Naive thymus-derived CD4-positive, alpha-beta T cell (primary cell): ENCODE measurements at regions of chr14 and their contacts with region 1.

Region 1: GRCh38 chr14:73358187-73358586 is 100.2 kb downstream of the NUMB start:
- DNase-seq: no peak
- ATAC-seq: no peak
- H3K4me3 ChIP-seq: no peak overlapping the region
- H3K4me3 Mint-ChIP-seq: no peak overlapping the region
- H3K27ac ChIP-seq: no peak overlapping the region
- H3K27ac Mint-ChIP-seq: no peak overlapping the region
- H3K4me1 ChIP-seq: no peaks in the 10 kb centered on the region
- H3K4me1 Mint-ChIP-seq: peaks cover 0 to 9% (median 0%) of the 10 kb centered on the region in 7 donors
- H3K27me3 ChIP-seq: no peaks in the 10 kb centered on the region
- H3K27me3 Mint-ChIP-seq: no peaks in the 10 kb centered on the region

Region 2: GRCh38 chr14:74223016-74223415 is 864.8 kb after region 1 on chr14:
- CTCF ChIA-PET with region 1: interaction called, 10 read pairs
- POLR2A ChIA-PET with region 1: no interaction called
- intact Hi-C with region 1: no loop called
- DNase-seq: no peak
- ATAC-seq: no peak
- H3K4me3 ChIP-seq: no peak overlapping the region
- H3K4me3 Mint-ChIP-seq: no peak overlapping the region
- H3K27ac ChIP-seq: no peak overlapping the region
- H3K27ac Mint-ChIP-seq: no peak overlapping the region
- H3K4me1 ChIP-seq: peaks cover 0 to 3% of the 10 kb centered on the region in 2 donors
- H3K4me1 Mint-ChIP-seq: peaks cover 0 to under 1% (median 0%) of the 10 kb centered on the region in 7 donors
- H3K27me3 ChIP-seq: no peaks in the 10 kb centered on the region
- H3K27me3 Mint-ChIP-seq: peaks cover 16 to 38% (median 27%) of the 10 kb centered on the region in 5 donors